Heart left ventricle (tissue), 16 donors: ENCODE measurements at regions of chr6 and their contacts with region 1.

Region 1: GRCh38 chr6:4164117-4164442 is 28.7 kb upstream of the ECI2 start:
- DNase-seq: no peak
- ATAC-seq: peak in 1 of 4 donors; percentile 38
- H3K4me3 ChIP-seq: no peak overlapping the region
- H3K27ac ChIP-seq: no peak overlapping the region
- H3K4me1 ChIP-seq: peaks cover 0 to 12% (median 5%) of the 10 kb centered on the region in 12 donors
- H3K27me3 ChIP-seq: no peaks in the 10 kb centered on the region
- CTCF ChIP-seq: no peak
- POLR2A ChIP-seq: no peak

Region 2: DNA sequence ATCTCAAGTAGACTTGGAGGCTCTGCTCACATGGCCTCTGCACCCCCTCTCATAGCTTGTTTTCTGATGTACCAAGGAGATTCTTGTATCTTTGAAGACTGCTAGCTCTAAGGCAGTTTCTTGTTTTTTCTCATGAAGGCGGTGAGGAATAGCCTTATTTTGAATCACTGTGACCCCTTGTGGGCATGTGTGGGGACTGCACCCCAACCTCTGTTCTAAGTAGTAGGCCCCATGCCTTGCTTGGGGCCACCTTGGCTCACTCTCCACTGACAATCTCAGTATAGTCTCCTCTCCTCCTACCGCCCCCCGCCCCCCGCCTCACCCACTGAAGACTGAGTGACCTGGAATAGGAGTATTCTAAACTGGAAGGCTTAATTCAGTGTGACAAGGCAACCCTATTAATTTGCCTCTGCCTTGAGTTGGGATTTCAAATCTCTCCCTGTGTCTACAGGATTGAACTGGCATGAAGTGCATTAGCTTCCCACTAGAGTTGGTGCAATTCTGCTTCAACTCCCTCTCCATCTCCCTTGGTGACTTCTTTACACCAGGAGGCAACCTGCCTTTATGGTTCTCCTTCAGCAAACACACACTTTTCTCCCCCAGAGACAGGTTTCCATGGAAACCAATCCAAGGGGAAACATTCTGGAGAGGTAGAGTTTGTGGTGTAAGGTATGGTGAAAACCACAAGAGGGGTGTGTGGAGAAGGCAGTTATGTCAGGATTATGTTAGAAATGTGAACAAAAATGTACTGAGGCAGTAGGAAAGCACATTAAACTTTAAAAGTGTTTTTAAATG is 46.7 kb after region 1 on chr6:
- intact Hi-C with region 1: loop called in 1 of 10 experiments (anchors 5 kb)
- DNase-seq: peak; percentile 27 to 56 (median 52)
- ATAC-seq: peak in 3 of 4 donors; percentile 68 to 80 (median 70)
- H3K4me3 ChIP-seq: no peak overlapping the region
- H3K27ac ChIP-seq: no peak overlapping the region
- H3K4me1 ChIP-seq: peaks cover 0 to 29% (median 9%) of the 10 kb centered on the region in 12 donors
- H3K27me3 ChIP-seq: no peaks in the 10 kb centered on the region
- CTCF ChIP-seq: peak; percentile 55 to 78 (median 70)
- POLR2A ChIP-seq: no peak

Region 3: DNA sequence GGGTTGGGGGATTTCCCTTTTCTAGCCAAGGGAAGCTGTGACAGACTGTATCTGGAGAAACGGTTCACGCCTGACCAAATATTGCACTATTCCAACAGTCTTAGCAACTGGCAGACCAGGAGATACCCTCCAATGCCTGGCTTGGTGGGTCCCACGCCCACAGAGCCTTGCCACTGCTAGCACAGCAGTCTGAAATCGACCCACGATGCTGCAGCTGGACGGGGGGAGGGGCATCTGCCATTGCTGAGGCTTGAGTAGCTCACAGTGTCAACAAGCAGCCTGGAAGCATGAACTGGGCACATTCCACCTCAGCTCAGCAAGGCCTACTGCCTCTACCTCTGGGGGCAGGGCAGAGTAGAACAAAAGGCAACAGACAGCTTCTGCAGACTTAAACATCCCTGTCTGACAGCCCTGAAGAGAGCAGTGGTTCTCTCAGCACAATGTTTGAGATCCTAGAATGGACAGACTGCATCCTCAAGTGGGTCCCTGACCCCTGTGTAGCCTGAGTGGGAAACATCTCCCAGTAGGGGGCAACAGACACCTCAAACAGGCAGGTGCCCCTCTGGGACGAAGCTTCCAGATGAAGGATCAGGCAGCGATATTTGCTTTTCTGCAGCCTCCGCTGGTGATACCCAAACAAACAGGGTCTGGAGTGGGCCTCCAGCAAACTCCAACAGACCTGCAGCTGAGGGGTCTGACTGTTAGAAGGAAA is 61.2 kb after region 1 on chr6:
- intact Hi-C with region 1: no loop called
- DNase-seq: no peak
- ATAC-seq: no peak
- H3K4me3 ChIP-seq: no peak overlapping the region
- H3K27ac ChIP-seq: no peak overlapping the region
- H3K4me1 ChIP-seq: peaks cover 0 to 5% (median 0%) of the 10 kb centered on the region in 12 donors
- H3K27me3 ChIP-seq: no peaks in the 10 kb centered on the region
- CTCF ChIP-seq: peak in 4 of 12 donors; percentile 7 to 18 (median 11)
- POLR2A ChIP-seq: no peak